Body of pancreas (tissue), 4 donors: ENCODE measurements at regions of chr16 and their contacts with region 1.

Region 1: GRCh38 chr16:74991593-74992403 is 6.9 kb upstream of the WDR59 start:
- DNase-seq: peak; percentile 32 to 77 (median 54)
- ATAC-seq: peak; percentile 79
- H3K4me3 ChIP-seq: no peak overlapping the region
- H3K27ac ChIP-seq: peak overlapping the region; percentile 62 to 90 (median 76)
- H3K4me1 ChIP-seq: peaks cover 31% of the 10 kb centered on the region
- H3K27me3 ChIP-seq: no peaks in the 10 kb centered on the region
- CTCF ChIP-seq: no peak
- POLR2A ChIP-seq: no peak

Region 2: GRCh38 chr16:74909366-74910064 is 82.3 kb before region 1 on chr16:
- intact Hi-C with region 1: no loop called
- DNase-seq: no peak
- ATAC-seq: no peak
- H3K4me3 ChIP-seq: no peak overlapping the region
- H3K27ac ChIP-seq: no peak overlapping the region
- H3K4me1 ChIP-seq: no peaks in the 10 kb centered on the region
- H3K27me3 ChIP-seq: no peaks in the 10 kb centered on the region
- CTCF ChIP-seq: no peak
- POLR2A ChIP-seq: no peak

Region 3: GRCh38 chr16:75099756-75100602 is 108.2 kb after region 1 on chr16:
- intact Hi-C with region 1: loop called (anchors 5 kb)
- DNase-seq: no peak
- ATAC-seq: no peak
- H3K4me3 ChIP-seq: no peak overlapping the region
- H3K27ac ChIP-seq: no peak overlapping the region
- H3K4me1 ChIP-seq: peaks cover 36% of the 10 kb centered on the region
- H3K27me3 ChIP-seq: no peaks in the 10 kb centered on the region
- CTCF ChIP-seq: no peak
- POLR2A ChIP-seq: no peak